IMR-90 (cell line): ENCODE measurements at regions of chr14 and their contacts with region 1.

Region 1: GRCh38 chr14:104820669-104821228 is 19.8 kb downstream of the ZBTB42 start:
- DNase-seq: peak; percentile 72
- ATAC-seq: peak; percentile 59
- H3K4me3 ChIP-seq: no peak overlapping the region
- H3K27ac ChIP-seq: no peak overlapping the region
- H3K4me1 ChIP-seq: peaks cover 4% of the 10 kb centered on the region
- H3K27me3 ChIP-seq: no peaks in the 10 kb centered on the region
- CTCF ChIP-seq: peak; percentile 71
- POLR2A ChIP-seq: no peak
- RAD21 ChIP-seq: peak; percentile 71

Region 2: DNA sequence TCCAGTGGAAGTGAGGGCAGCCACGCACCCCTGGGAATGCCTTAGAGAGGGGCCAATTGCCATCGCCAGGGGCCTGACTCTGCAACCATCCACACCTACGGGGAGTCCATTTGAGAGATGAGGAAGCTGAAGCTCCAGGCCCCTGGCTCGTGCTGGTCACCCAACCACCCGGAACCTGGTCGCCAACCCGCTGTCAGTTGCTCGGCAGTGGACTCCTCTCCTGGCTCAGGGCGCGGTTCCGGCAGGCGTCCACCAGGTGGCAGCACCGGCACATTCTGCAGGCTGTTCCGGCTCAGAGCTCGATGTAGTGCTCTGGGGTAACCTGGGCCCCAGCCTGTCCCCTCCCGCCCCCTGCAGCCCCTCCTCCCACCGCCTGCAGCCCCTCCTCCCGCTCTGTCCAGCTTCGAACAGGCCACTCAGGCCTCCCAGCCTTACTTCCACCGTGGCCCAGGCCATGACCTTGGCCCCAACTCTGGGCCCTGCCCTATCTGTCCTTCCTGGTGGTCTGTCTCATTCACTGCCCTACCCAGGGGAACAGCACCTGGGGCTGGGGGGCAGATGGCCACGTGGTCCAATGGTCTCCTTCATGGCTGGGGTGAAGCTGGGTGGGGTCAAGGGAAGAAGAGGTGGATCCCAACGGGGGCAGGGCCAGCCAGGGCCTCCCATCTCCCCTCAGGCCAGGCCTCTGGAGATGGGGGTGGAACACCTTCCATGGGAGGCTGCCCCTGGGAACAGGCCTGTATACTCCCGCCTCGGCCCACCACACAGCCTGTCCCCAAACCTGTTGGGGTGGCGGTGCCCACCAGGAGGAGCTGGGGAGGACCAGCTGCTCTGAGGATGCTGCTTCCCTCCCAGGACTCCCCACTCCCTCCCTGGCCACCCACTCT is 52.1 kb before region 1 on chr14:
- CTCF ChIA-PET with region 1: interaction called, 3 read pairs
- POLR2A ChIA-PET with region 1: no interaction called
- dilution Hi-C with region 1: no loop called
- in situ Hi-C with region 1: loop called (anchors 5 kb)
- intact Hi-C with region 1: loop called (anchors 1 kb)
- DNase-seq: peak; percentile 72
- ATAC-seq: peak; percentile 96
- H3K4me3 ChIP-seq: no peak overlapping the region
- H3K27ac ChIP-seq: peak overlapping the region; percentile 43; the same call in 1 of the 2 replicates
- H3K4me1 ChIP-seq: peaks cover 5% of the 10 kb centered on the region
- H3K27me3 ChIP-seq: no peaks in the 10 kb centered on the region
- CTCF ChIP-seq: peak; percentile 87
- POLR2A ChIP-seq: 0 out of 2 replicates have a peak, but pooled peaks have one; percentile 40
- RAD21 ChIP-seq: peak; percentile 87

Region 3: GRCh38 chr14:104882325-104883115 is 61.8 kb after region 1 on chr14:
- CTCF ChIA-PET with region 1: no interaction called
- POLR2A ChIA-PET with region 1: no interaction called
- dilution Hi-C with region 1: no loop called
- in situ Hi-C with region 1: no loop called
- intact Hi-C with region 1: no loop called
- DNase-seq: no peak
- ATAC-seq: peak; percentile 72
- H3K4me3 ChIP-seq: no peak overlapping the region
- H3K27ac ChIP-seq: no peak overlapping the region
- H3K4me1 ChIP-seq: no peaks in the 10 kb centered on the region
- H3K27me3 ChIP-seq: no peaks in the 10 kb centered on the region
- CTCF ChIP-seq: no peak
- POLR2A ChIP-seq: no peak
- RAD21 ChIP-seq: no peak